ENCODE measurements at regions of chr15 and their contacts with region 1.

Region 1: DNA sequence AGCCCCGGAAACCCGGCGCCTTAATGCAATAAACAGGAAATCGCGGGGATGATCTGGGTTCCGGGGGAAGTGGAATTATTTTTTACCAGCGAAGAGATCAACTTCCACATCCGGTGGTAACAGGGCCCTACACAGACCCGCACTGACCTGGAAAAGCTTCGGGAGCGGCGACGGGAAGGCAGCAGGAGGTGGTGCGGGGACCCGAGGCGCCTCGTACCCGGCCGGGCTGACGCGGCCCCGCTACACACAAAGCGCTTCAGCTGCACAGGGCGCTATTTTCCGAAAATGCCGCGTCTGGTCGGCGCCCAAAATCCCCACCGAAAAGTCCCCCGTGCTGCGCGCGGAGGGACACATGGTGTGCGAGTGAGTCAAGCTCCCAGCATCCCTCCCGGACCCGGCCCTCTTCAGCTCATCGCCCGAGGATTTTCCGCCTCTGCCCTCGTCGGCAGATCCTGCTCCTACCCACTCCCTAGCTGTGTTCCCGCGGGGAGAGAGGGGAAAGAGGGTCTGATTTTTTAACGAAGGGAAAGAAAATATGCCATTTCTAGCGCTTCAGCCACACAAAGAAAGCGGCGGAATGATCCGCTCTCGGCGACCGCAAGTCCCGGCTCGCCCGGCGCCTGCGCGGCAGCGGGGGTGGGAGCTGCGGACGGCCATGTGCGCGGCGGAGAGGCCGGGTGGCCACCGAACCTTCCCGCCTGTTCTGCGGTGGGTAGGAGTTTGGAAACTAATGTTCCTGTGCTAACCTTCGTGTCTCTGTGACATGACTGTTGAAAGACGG is at the start of gene GABPB1:
- DNase-seq: peak; percentile 86
- ATAC-seq: peak; percentile 87 to 95 (median 92)
- H3K4me3 ChIP-seq: peak within 1 kb of the TSS; percentile 61 to 97 (median 94)
- H3K27ac ChIP-seq: peak within 1 kb of the TSS; percentile 97 to 100 (median 99)
- H3K4me1 ChIP-seq: peaks cover 0 to 66% (median 50%) of the 10 kb centered on the region in 9 donors
- H3K27me3 ChIP-seq: no peaks in the 10 kb centered on the region
- CTCF ChIP-seq: no peak
- total RNA-seq, gene GABPB1: 7.8 to 12.6 (median 8.9) TPM

Region 2: DNA sequence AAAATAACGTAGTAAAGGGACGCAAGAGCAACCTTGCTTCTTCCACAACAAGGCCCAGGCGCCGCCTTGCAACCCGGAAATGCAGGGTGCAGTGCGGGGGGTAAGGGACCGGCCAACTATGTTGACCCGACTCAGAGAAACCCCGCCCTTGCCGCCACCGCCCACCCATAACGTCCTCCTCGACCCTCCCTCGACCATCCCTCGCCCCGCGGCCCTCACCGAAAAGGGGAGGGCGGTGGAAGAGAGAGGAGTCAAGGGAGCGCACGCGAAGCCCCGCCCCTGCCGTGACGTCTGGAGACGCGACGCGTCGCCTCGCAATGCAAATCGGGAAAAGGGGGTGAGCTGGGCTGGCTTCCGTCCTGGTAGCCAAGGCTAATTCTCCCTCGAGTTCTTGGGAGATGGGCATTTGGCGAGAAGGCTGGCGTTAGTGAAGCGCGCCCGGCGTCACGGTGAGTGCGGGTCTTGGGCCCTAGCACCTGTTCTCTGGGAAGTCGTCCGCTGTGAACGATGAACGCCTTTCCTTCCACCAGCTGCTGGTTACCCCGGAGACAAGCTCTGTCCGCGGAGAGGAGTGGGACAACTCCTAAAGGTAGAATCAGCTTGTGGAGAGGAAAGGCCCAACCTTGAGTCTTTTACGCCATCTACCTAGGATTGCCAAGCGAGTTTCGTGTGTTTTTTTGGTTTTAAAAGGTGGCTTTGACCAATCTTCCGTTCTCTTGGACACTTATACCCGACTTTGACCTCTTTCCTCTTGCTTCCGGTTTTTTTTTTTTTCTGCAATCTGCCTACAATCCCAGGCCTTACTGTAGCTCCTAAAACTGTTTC is 69.2 kb after region 1 on chr15 and contains the start of gene USP8:
- intact Hi-C with region 1: loop called in 3 of 10 experiments (anchors 1 to 5 kb)
- DNase-seq: peak; percentile 96 to 97
- ATAC-seq: peak; percentile 99
- H3K4me3 ChIP-seq: peak within 1 kb of the TSS; percentile 69 to 95 (median 82)
- H3K27ac ChIP-seq: peak within 1 kb of the TSS; percentile 28 to 94 (median 88)
- H3K4me1 ChIP-seq: peaks cover 3 to 36% (median 20%) of the 10 kb centered on the region in 9 donors
- H3K27me3 ChIP-seq: no peaks in the 10 kb centered on the region
- CTCF ChIP-seq: no peak
- total RNA-seq, gene USP8: 40.2 to 53.6 (median 45.7) TPM

Measured in heart right ventricle (tissue), 16 donors.